H1 (cell line): ENCODE measurements at regions of chr12 and their contacts with region 1.

Region 1: DNA sequence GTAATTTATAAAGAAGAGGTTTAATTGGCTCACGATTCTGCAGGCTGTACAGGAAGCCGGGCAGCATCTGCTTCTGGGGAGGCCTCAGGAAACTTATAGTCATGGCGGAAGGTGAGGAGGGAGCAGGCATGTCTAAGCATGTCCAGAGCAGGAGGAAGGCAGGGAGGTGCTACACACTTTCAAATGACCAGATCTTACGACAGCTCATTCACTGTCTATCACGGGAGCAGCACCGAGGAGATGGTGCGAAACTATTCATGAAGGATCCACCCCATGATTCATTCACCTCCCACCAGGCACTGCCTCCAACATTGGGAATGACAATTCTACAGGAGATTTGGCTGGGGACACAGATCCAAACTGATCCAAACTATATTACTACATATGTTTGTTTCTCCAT is 10.0 kb downstream of the SFSWAP start:
- DNase-seq: no peak
- H3K4me3 ChIP-seq: no peak overlapping the region
- H3K27ac ChIP-seq: 0 out of 2 replicates have a peak overlapping the region, but pooled peaks have one; percentile 49
- H3K4me1 ChIP-seq: peaks cover 12 to 20% (median 16%) of the 10 kb centered on the region in 4 experiments
- H3K27me3 ChIP-seq: no peaks in the 10 kb centered on the region
- CTCF ChIP-seq: no peak
- EP300 ChIP-seq: no peak
- POLR2A ChIP-seq: no peak
- RAD21 ChIP-seq: no peak

Region 2: GRCh38 chr12:131710464-131711457 is 10.2 kb before region 1 on chr12 and contains the start of gene SFSWAP:
- CTCF ChIA-PET with region 1: interaction called, 3 read pairs
- POLR2A ChIA-PET with region 1: interaction called, 10 read pairs
- DNase-seq: peak in 1 of 2 experiments; percentile 87
- H3K4me3 ChIP-seq: peak within 1 kb of the TSS; percentile 93 to 98 (median 96)
- H3K27ac ChIP-seq: peak within 1 kb of the TSS; percentile 99
- H3K4me1 ChIP-seq: peaks cover 0 to 4% (median 1%) of the 10 kb centered on the region in 4 experiments; a peak in 6 of 7 replicates
- H3K27me3 ChIP-seq: no peaks in the 10 kb centered on the region
- CTCF ChIP-seq: no peak
- EP300 ChIP-seq: peak in 1 of 2 experiments; percentile 98; a peak in 1 of 3 replicates
- POLR2A ChIP-seq: peak; percentile 47 to 54; a peak in 2 of 3 replicates
- RAD21 ChIP-seq: no peak
- total RNA-seq, gene SFSWAP: 48.3 and 49.5 TPM in 2 replicates